ENCODE measurements at regions of chr19 and their contacts with region 1.

Region 1: DNA sequence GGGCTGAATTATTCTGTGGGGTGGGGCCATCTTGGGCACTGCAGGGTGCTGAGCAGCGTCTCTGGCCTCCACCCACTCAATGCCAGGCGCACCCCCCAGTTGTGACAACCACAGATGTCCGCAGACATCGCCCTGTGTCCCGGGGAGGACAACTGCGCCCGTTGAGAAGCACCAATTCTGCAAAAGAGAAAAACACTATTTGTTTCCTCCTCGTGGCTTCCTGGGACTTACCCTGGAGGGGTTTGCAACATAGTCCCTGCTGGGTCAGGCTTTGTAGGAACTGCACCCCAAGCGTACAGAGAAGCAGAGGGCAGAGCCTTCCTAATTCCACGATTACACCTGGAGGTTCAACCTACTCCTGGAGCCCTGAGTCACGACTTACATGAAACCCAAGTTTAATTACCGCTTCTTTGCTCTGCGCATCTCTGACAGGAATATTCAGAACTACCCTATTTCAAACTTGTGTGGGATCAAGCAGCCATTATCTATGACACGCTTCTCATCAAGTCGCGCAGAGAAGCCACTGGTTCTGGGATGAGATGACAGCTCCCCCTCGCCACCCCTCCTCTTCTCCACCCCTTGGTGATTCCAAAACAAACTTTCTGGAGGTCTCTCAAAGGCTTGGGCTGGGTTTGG is 11.1 kb upstream of the SLC39A3 start:
- DNase-seq: no peak
- H3K4me3 ChIP-seq: no peak overlapping the region
- H3K27ac ChIP-seq: no peak overlapping the region
- H3K4me1 ChIP-seq: no peaks in the 10 kb centered on the region
- H3K27me3 ChIP-seq: no peaks in the 10 kb centered on the region
- CTCF ChIP-seq: no peak

Region 2: DNA sequence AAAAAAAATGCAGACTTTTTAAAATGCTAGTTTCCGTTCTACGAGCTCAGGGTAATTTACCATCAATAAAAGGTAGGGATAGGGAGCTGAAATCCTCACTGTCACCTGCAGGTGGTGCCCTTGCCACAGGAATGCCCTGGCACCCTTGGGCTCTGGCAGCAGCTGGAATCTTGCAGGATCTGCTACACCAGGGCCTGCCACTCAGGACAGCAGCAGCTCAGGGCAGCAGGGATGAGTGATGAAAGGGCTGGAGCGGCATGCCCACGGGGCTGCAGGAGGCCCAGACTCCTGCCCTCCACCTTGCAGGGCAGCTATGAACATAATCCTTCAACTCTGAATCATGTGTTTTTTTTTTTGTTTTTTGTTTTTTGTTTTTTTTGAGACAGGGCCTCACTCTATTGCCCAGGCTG is 102.4 kb before region 1 on chr19:
- intact Hi-C with region 1: loop called (anchors 1 kb)
- DNase-seq: peak in 1 of 2 donors; percentile 78
- H3K4me3 ChIP-seq: no peak overlapping the region
- H3K27ac ChIP-seq: no peak overlapping the region
- H3K4me1 ChIP-seq: no peaks in the 10 kb centered on the region
- H3K27me3 ChIP-seq: no peaks in the 10 kb centered on the region
- CTCF ChIP-seq: peak; percentile 72 to 89 (median 83)